A549 (cell line): ENCODE measurements at regions of chr19 and their contacts with region 1.

Region 1: GRCh38 chr19:35748106-35749020 is at the start of gene LIN37:
- DNase-seq: peak; percentile 100
- ATAC-seq: peak; percentile 75 to 86
- H3K4me3 ChIP-seq: peak within 1 kb of the TSS; percentile 75
- H3K27ac ChIP-seq: peak within 1 kb of the TSS; percentile 76 to 87
- H3K4me1 ChIP-seq: peaks cover 28% of the 10 kb centered on the region
- CTCF ChIP-seq: no peak
- EP300 ChIP-seq: no peak
- POLR2A ChIP-seq: peak; percentile 88
- RAD21 ChIP-seq: no peak
- polyA plus RNA-seq, gene LIN37: 8.1 and 11.5 TPM in 2 replicates

Region 2: GRCh38 chr19:35648017-35648961 is 100.1 kb before region 1 on chr19 and contains the start of gene COX6B1:
- CTCF ChIA-PET with region 1: interaction called, 3 read pairs
- POLR2A ChIA-PET with region 1: interaction called, 10 read pairs
- DNase-seq: peak; percentile 99 to 100
- ATAC-seq: peak; percentile 62 to 76
- H3K4me3 ChIP-seq: peak within 1 kb of the TSS; percentile 67
- H3K27ac ChIP-seq: peak within 1 kb of the TSS; percentile 81 to 84
- H3K4me1 ChIP-seq: peaks cover 18% of the 10 kb centered on the region
- CTCF ChIP-seq: no peak
- EP300 ChIP-seq: no peak
- POLR2A ChIP-seq: peak; percentile 96
- RAD21 ChIP-seq: no peak
- polyA plus RNA-seq, gene COX6B1: 749 and 1,115 TPM in 2 replicates

Region 3: DNA sequence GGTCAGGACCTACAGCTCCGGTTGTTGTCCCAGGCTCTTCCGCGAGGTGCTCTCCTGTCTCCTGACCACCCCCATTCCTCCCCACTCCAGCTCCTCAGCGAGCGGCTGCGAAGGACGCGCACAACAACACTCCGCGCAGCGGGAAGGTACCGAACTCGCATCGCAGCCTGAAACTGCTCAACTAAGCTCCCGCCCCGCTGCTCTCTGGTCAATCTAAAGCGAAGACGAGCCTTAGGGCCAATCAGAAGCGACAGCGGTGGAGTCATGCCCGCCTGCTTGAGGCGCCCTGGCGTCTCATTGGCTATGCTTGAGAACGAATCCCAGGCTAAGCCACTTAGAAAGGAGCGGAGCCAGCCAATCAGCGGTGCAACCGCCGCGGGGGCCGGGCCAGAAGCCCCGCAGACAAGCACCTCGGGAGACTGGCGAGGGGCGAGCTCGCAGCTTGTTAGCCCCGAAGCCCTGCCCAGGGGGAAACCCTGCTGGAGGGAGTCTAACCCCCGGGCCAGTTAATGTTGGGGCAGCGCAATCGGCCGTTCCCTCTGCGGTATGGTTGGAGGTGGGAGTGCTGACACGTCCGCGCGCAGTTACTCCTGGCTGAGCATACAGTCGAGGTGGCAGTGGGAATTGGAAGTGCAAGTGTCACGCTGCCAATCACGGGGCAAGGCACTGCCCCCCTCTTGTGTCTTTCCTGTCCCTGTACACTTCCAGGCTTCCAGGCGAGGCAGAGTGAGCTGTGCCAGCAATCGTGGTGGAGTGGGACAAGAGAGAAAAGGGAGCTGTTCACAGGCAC is 45.9 kb before region 1 on chr19:
- CTCF ChIA-PET with region 1: interaction called, 10 read pairs
- POLR2A ChIA-PET with region 1: interaction called, 4 read pairs
- DNase-seq: peak; percentile 100
- ATAC-seq: peak; percentile 98 to 99
- H3K4me3 ChIP-seq: peak overlapping the region; percentile 53
- H3K27ac ChIP-seq: peak overlapping the region; percentile 52 to 80
- H3K4me1 ChIP-seq: no peaks in the 10 kb centered on the region
- CTCF ChIP-seq: no peak
- EP300 ChIP-seq: no peak
- POLR2A ChIP-seq: peak; percentile 41
- RAD21 ChIP-seq: no peak

Region 4: DNA sequence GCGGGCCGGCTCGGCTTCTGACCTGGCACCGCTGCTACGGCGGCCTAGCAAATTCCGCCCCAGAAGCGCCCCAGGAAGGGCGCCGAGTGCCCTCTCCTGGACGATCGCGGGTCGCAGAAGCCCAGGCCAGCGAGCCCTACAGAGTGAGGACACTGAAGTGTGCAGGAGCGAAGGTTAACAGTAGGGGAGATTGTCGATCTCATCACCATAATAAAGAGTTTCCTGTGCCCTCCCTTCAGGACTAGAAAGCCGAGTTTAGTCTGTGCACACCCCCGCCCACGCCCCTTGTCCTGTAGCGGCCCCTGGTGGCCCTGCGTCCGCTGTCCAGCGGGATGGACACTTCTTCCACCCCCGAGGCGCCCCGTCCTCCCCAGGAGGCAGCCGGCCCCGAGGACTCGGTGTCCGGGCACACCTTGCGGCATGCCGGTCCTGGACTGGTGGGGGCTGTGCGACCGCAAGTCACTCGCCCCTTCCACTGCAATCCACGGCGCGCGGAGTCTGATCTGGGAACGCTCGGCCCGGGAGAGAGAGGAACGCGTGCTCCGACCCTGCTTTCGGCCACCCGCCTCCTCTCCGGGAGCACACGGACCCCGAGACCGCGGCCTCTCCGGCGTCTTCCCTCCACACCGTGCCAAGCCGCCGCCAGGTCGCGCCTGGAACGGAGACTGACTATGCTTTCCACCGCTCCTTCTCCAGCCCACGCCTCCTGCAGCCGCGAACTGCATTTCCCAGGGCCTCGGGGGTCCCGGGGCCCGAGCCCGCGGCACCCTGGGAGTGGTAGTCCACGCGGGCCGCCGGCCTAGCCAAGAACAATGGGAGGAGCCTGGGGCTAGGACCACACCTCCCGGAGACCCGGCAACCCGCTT is 31.3 kb before region 1 on chr19:
- CTCF ChIA-PET with region 1: interaction called, 29 read pairs
- POLR2A ChIA-PET with region 1: interaction called, 6 read pairs
- DNase-seq: peak; percentile 95 to 99
- ATAC-seq: peak; percentile 74 to 91
- H3K4me3 ChIP-seq: peak overlapping the region; percentile 87
- H3K27ac ChIP-seq: peak overlapping the region; percentile 91 to 98
- H3K4me1 ChIP-seq: peaks cover 20% of the 10 kb centered on the region
- CTCF ChIP-seq: peak; percentile 100
- EP300 ChIP-seq: no peak
- POLR2A ChIP-seq: peak; percentile 74
- RAD21 ChIP-seq: peak; percentile 89 to 99

Region 5: GRCh38 chr19:35727053-35727947 is 21.1 kb before region 1 on chr19:
- CTCF ChIA-PET with region 1: interaction called, 10 read pairs
- POLR2A ChIA-PET with region 1: interaction called, 4 read pairs
- DNase-seq: no peak
- ATAC-seq: no peak
- H3K4me3 ChIP-seq: no peak overlapping the region
- H3K27ac ChIP-seq: no peak overlapping the region
- H3K4me1 ChIP-seq: no peaks in the 10 kb centered on the region
- CTCF ChIP-seq: no peak
- EP300 ChIP-seq: no peak
- POLR2A ChIP-seq: no peak
- RAD21 ChIP-seq: no peak

Region 6: DNA sequence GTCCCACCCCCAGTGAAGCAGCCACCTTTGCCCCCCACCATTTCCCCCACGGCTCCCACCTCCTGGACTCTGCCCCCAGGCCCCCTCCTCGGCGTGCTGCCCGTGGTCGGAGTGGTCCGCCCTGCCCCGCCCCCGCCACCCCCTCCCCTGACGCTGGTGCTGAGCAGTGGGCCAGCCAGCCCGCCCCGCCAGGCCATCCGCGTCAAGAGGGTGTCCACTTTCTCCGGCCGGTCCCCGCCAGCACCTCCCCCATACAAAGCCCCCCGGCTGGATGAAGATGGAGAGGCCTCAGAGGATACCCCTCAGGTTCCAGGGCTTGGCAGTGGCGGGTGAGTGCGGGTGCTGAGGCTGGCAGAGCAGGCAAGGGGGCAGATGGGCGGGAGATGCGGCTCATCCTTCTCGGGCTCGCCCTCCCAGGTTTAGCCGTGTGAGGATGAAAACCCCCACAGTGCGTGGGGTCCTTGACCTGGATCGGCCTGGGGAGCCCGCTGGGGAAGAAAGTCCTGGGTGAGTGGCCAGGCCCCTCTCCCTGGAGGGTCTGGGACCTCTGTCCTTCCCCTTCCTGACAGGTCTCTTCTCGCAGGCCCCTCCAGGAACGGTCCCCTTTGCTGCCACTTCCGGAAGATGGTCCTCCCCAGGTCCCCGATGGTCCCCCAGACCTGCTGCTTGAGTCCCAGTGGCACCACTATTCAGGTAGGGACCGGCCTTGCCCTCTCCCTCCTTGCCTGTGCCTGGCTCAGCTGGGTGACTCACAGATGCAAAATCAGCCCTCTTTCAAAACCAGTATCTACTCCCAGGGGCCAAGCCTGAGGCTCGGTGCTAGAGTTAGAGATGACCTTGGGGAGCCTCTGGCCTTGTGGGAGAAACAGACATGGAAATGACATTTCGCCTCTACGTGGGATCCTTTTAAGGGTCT is 14.9 kb before region 1 on chr19:
- CTCF ChIA-PET with region 1: interaction called, 11 read pairs
- POLR2A ChIA-PET with region 1: interaction called, 4 read pairs
- DNase-seq: no peak
- ATAC-seq: no peak
- H3K4me3 ChIP-seq: no peak overlapping the region
- H3K27ac ChIP-seq: no peak overlapping the region
- H3K4me1 ChIP-seq: no peaks in the 10 kb centered on the region
- CTCF ChIP-seq: no peak
- EP300 ChIP-seq: no peak
- POLR2A ChIP-seq: no peak
- RAD21 ChIP-seq: no peak

Region 7: GRCh38 chr19:35775298-35776110 is 27.1 kb after region 1 on chr19 and contains the start of gene ARHGAP33:
- CTCF ChIA-PET with region 1: interaction called, 4 read pairs
- POLR2A ChIA-PET with region 1: interaction called, 10 read pairs
- DNase-seq: peak; percentile 98 to 99
- ATAC-seq: peak; percentile 78 to 90
- H3K4me3 ChIP-seq: peak within 1 kb of the TSS; percentile 62
- H3K27ac ChIP-seq: peak within 1 kb of the TSS; percentile 47 to 81
- H3K4me1 ChIP-seq: peaks cover 31% of the 10 kb centered on the region
- CTCF ChIP-seq: no peak
- EP300 ChIP-seq: no peak
- POLR2A ChIP-seq: no peak
- RAD21 ChIP-seq: 0 out of 5 replicates have a peak, but pooled peaks of 1 of the 2 experiments have one; percentile 11
- polyA plus RNA-seq, gene ARHGAP33: 0.84 and 2.1 TPM in 2 replicates

Region 8: GRCh38 chr19:35805526-35806102 is 57.3 kb after region 1 on chr19:
- CTCF ChIA-PET with region 1: no interaction called
- POLR2A ChIA-PET with region 1: no interaction called
- DNase-seq: no peak
- ATAC-seq: no peak
- H3K4me3 ChIP-seq: no peak overlapping the region
- H3K27ac ChIP-seq: no peak overlapping the region
- H3K4me1 ChIP-seq: no peaks in the 10 kb centered on the region
- CTCF ChIP-seq: no peak
- EP300 ChIP-seq: no peak
- POLR2A ChIP-seq: no peak
- RAD21 ChIP-seq: no peak

Region 9: GRCh38 chr19:35940078-35940775 is 191.9 kb after region 1 on chr19:
- CTCF ChIA-PET with region 1: no interaction called
- POLR2A ChIA-PET with region 1: no interaction called
- DNase-seq: no peak
- ATAC-seq: no peak
- H3K4me3 ChIP-seq: no peak overlapping the region
- H3K27ac ChIP-seq: no peak overlapping the region
- H3K4me1 ChIP-seq: peaks cover 22% of the 10 kb centered on the region
- CTCF ChIP-seq: no peak
- EP300 ChIP-seq: no peak
- POLR2A ChIP-seq: no peak
- RAD21 ChIP-seq: no peak